SK-N-SH (cell line): ENCODE measurements at regions of chr5 and their contacts with region 1.

Region 1: GRCh38 chr5:108260117-108260857 is 121.6 kb downstream of the FBXL17 start:
- DNase-seq: peak; percentile 47
- H3K4me3 ChIP-seq: peak overlapping the region in 1 of 2 experiments; percentile 21; a peak in 1 of 4 replicates
- H3K27ac ChIP-seq: no peak overlapping the region
- H3K4me1 ChIP-seq: peaks cover 0 to 6% of the 10 kb centered on the region in 2 experiments; a peak in 2 of 4 replicates
- H3K27me3 ChIP-seq: no peaks in the 10 kb centered on the region
- CTCF ChIP-seq: peak; percentile 98
- EP300 ChIP-seq: no peak
- RAD21 ChIP-seq: peak; percentile 94

Region 2: GRCh38 chr5:108201721-108202120 is 58.6 kb before region 1 on chr5:
- CTCF ChIA-PET with region 1: no interaction called
- POLR2A ChIA-PET with region 1: no interaction called
- DNase-seq: no peak
- H3K4me3 ChIP-seq: no peak overlapping the region
- H3K27ac ChIP-seq: no peak overlapping the region
- H3K4me1 ChIP-seq: no peaks in the 10 kb centered on the region; a peak in 1 of 4 replicates
- H3K27me3 ChIP-seq: no peaks in the 10 kb centered on the region
- CTCF ChIP-seq: 0 out of 2 replicates have a peak, but pooled peaks have one; percentile 15
- EP300 ChIP-seq: no peak
- RAD21 ChIP-seq: peak; percentile 24

Region 3: DNA sequence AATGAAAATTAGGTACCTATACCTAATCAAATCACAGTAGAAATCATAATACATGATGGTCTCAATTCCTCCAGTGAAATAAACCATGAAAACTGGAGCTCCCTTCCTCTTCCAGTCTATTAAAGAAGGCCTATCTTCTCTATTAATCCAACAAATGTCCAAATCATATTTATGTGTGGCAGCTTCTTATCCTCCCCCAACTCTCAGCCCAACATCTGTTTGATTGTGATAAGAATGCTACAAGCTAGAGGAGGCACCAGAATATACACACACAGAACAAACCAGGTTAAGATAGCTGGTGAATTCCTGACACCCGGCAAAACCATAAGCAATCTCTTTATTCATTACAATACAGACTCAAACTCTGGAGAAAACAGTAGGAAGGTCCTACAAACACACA is 10.8 kb after region 1 on chr5:
- CTCF ChIA-PET with region 1: interaction called, 29 read pairs
- POLR2A ChIA-PET with region 1: no interaction called
- DNase-seq: peak; percentile 34
- H3K4me3 ChIP-seq: no peak overlapping the region
- H3K27ac ChIP-seq: no peak overlapping the region
- H3K4me1 ChIP-seq: no peaks in the 10 kb centered on the region; a peak in 1 of 4 replicates
- H3K27me3 ChIP-seq: no peaks in the 10 kb centered on the region
- CTCF ChIP-seq: no peak
- EP300 ChIP-seq: peak in 1 of 2 experiments; percentile 31; a peak in 1 of 4 replicates
- RAD21 ChIP-seq: no peak

Region 4: DNA sequence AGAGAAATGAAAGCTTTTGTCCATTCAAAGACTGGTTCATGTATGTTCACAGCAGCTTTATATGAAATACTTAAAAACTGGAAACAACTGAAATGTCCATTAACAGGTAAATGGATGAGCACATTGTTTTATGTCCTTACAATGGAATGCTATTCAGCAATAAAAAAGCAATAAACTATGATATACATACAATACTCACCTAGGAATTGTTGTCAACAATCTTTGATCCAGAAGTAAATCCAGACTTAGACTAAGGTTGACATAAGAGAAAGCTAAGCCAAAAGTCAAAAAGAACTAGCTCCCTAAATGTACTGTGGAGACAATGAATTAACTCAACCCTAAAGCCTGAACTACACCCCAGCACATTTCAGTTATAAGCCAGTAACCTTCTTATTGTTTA is 66.7 kb after region 1 on chr5:
- CTCF ChIA-PET with region 1: interaction called, 19 read pairs
- POLR2A ChIA-PET with region 1: no interaction called
- DNase-seq: no peak
- H3K4me3 ChIP-seq: no peak overlapping the region
- H3K27ac ChIP-seq: no peak overlapping the region
- H3K4me1 ChIP-seq: no peaks in the 10 kb centered on the region
- H3K27me3 ChIP-seq: no peaks in the 10 kb centered on the region
- CTCF ChIP-seq: no peak
- EP300 ChIP-seq: no peak
- RAD21 ChIP-seq: no peak

Region 5: DNA sequence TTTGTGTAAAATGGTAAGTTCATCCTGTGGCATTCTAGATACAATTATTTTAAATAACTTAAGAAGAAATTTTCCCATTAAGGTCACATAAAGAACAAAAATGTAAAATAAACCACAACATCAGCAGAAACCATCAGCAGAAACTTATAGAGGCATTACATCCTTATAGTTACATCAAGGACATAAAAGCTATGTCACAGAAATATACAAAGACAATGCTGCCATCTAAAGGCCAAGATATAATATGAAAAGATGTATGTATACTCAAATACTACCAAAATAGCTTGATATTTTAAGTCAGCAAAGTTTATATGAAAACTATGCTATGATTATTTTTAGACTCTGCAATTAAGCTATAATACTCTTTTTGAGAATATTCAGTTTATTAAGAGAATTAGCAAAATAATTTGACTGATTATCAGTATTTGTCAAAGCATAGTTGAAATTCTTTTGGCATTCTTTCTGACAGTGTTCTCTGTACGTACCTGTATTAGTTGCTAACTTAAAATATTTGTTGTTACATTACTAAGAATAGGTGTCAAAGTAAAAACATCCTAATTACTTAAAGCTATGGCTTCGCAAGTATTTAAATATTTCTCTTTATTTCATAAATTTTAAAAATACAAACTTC is 85.4 kb after region 1 on chr5:
- CTCF ChIA-PET with region 1: interaction called, 55 read pairs
- POLR2A ChIA-PET with region 1: no interaction called
- DNase-seq: peak; percentile 12
- H3K4me3 ChIP-seq: no peak overlapping the region
- H3K27ac ChIP-seq: no peak overlapping the region
- H3K4me1 ChIP-seq: no peaks in the 10 kb centered on the region; a peak in 1 of 4 replicates
- H3K27me3 ChIP-seq: no peaks in the 10 kb centered on the region
- CTCF ChIP-seq: peak; percentile 66
- EP300 ChIP-seq: no peak
- RAD21 ChIP-seq: peak; percentile 76

Region 6: DNA sequence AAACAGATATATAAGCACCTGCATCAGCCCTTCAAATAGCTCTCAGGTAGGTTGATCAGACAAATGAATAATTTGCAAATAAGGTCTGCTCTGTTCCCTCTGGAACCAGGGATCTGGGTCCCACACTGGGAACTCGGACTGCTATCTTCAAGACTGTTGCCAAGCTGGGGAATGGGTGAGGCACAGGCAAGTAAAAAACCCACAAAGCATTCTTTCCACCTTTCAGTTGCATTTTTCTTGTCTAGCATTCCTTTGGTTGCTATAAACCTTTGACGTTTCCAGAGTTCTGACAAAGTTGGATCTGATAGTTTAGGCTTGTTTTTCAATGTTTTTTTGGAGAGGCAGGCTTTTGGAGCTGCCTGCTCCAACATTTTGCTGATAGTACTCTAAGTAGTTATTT is 101.5 kb after region 1 on chr5:
- CTCF ChIA-PET with region 1: interaction called, 10 read pairs
- POLR2A ChIA-PET with region 1: no interaction called
- DNase-seq: no peak
- H3K4me3 ChIP-seq: no peak overlapping the region
- H3K27ac ChIP-seq: no peak overlapping the region
- H3K4me1 ChIP-seq: no peaks in the 10 kb centered on the region
- H3K27me3 ChIP-seq: no peaks in the 10 kb centered on the region
- CTCF ChIP-seq: no peak
- EP300 ChIP-seq: no peak
- RAD21 ChIP-seq: no peak

Region 7: GRCh38 chr5:108418197-108418596 is 157.9 kb after region 1 on chr5:
- CTCF ChIA-PET with region 1: no interaction called
- POLR2A ChIA-PET with region 1: no interaction called
- DNase-seq: no peak
- H3K4me3 ChIP-seq: no peak overlapping the region
- H3K27ac ChIP-seq: no peak overlapping the region
- H3K4me1 ChIP-seq: no peaks in the 10 kb centered on the region
- H3K27me3 ChIP-seq: no peaks in the 10 kb centered on the region
- CTCF ChIP-seq: no peak
- EP300 ChIP-seq: no peak
- RAD21 ChIP-seq: no peak